Right ventricle myocardium inferior (tissue), 1 donor: ENCODE measurements at regions of chr19 and their contacts with region 1.

Region 1: DNA sequence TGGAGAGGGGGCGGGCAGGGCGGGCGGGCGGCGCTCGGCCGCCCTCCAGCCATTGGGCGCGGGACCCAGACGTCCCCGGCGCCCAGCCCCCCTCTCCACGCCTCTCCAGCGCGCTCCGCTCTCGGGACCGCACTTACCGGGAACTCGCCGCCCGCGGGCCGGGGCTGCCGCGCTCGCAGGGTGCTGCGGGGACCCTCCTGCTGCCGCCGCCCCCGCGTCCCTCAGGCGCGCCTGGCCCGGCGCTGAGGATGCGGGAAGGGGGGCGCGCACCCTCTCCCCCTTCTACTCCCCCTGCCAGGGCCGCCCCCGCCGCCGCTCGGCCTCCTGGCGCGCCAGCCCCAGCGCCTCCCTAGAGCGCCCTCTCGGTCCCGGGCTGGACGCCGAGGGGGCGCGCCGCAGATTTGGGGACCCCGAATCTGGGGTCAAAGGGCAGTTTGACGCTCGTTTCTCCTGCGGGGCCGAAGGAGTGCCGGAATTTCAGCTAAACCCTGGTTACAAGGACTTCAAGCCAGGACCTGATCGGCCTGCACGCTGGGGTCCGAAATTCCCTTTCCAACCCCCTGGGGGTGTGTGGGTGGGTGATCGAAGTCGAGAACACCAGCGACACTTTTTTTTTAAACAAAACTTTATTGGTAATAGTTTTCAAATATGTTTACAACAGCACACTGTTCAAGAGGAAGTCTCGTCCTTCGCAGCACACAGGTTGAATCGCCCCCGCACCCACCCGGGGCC is 696 bp upstream of the SAMD1 start:
- DNase-seq: peak; percentile 58
- ATAC-seq: peak; percentile 87

Region 2: DNA sequence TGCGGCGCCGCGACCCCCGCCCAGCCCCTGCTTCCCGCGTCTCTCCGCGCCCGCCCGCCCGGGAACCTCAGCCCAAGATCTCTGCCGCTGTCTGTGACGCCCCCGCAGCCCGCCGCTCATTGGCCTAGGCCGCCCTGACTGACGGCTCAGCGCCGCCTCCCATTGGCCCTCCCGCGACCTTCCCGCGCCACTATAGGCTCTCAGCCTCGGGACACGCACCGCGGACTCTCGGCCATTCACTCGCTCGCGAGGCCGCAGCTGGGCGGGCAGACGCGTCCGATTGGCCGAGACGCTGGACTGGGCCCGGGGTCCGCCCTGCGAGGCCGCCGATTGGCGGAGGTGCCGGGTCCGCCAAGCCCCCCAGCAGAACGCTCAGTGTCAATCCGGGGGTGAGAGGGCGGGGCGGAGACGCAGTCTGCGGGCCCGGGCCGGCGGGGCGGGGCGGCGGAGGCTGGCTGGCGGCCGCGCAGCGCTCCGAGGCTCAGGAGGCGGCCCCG is 26.5 kb after region 1 on chr19 and contains the start of gene PRKACA:
- intact Hi-C with region 1: loop called (anchors 2 kb)
- DNase-seq: peak; percentile 100
- ATAC-seq: peak; percentile 90
- total RNA-seq, gene PRKACA: 494 TPM

Region 3: GRCh38 chr19:14136509-14137281 is 45.4 kb after region 1 on chr19 and contains the start of gene ASF1B:
- intact Hi-C with region 1: loop called (anchors 1 kb)
- DNase-seq: peak; percentile 99
- ATAC-seq: peak; percentile 96
- total RNA-seq, gene ASF1B: 2.0 TPM